Ascending aorta (tissue), 2 donors: ENCODE measurements at regions of chr11 and their contacts with region 1.

Region 1: GRCh38 chr11:17207317-17208258 is at the start of gene PIK3C2A:
- DNase-seq: peak; percentile 89 to 98
- H3K4me3 ChIP-seq: peak within 1 kb of the TSS; percentile 68 to 95
- H3K27ac ChIP-seq: peak within 1 kb of the TSS; percentile 85 to 94
- H3K4me1 ChIP-seq: peaks cover 0 to 10% of the 10 kb centered on the region in 2 donors
- H3K27me3 ChIP-seq: no peaks in the 10 kb centered on the region
- CTCF ChIP-seq: no peak
- total RNA-seq, gene PIK3C2A: 56.6 TPM

Region 2: DNA sequence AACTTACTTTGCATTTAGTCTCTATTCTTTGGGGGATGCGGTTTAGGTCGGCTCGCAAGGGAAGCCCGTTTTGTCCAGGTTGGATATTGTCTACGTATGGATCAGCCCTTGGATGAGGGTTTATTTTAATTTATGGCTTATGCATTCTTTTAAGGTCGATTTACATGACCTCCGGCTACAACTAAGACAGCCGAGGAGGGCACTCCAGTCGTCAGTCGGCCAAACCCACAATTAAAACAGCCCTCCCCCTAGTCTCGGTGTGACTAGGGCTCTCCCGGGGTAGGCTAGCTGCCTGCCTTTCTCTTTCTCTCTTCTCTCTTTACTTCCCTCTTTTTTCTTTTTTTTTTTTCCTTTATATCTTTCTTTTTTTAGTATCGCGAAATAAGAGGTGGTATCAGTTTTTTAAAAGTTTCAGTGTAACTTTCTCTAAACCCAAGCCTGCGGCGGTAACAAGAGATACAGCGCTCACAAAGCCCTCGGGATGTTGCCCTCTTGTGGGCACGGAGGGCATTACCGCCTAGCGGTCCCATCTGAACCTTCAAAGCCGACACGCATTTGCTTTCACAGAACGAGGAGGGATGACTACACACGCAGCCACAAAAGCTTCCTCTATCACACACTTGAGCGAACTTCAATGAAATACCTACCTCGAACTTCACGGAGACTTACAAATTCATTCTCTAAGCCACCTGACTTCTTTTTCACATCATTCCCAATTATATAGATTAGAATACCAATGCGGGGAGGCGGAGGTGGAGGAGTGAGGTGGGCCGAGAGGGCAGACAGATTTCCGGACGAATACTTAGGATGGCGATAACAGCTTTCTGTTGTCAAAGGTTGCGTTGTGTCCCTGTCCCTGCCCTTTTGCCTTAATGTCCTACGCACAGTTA is 601.4 kb before region 1 on chr11:
- intact Hi-C with region 1: loop called (anchors 5 kb)
- DNase-seq: peak in 1 of 2 donors; percentile 94
- H3K4me3 ChIP-seq: peak overlapping the region; percentile 73 to 75
- H3K27ac ChIP-seq: peak overlapping the region; percentile 63
- H3K4me1 ChIP-seq: peaks cover 7 to 18% of the 10 kb centered on the region in 2 donors
- H3K27me3 ChIP-seq: peaks cover 15% of the 10 kb centered on the region
- CTCF ChIP-seq: peak; percentile 79 to 95 (median 95)

Region 3: DNA sequence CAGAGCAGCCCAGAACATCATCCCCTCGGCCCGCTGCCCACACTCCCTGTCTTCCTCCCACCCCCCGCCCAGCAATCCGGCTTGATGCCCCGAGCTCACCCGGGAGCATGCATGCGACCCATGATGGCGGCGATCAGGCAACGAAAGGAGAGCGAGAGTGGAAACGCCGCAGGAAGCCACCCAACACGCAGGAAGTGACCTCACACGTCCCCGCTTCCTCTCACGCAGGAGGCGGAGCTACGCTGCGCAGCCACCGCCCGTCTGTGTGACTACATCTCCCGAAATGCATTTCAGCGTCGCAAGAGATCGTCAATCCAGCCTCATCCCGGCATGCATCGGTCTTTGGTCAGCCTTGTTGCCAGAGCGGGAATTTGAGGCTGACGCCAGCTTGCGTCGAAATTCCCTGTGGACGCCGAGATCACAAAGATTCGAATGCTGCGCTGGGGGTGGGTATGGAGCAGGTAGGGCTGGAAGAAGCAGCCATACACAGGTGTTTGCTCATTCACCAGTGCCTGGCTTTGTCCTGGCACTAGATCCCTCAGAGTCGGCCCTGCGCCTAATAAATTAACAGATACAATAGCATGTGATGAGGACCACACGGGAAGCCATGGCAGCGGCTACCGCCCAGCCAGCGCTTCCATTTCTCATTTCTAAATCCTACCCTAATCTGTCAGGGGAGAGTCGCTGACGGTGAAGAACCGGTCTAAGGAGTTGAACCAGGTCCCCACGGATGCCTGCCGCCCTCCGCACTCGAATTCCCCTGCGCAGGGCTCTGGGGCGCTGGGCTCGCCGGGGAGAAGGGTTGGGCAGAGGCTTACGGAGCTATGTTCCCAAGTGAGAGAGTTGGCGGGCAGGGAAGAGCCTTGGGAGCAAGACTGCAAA is 129.8 kb before region 1 on chr11 and contains the start of gene RPS13:
- intact Hi-C with region 1: loop called (anchors 1 kb)
- DNase-seq: peak; percentile 90 to 98
- H3K4me3 ChIP-seq: peak within 1 kb of the TSS; percentile 87 to 97
- H3K27ac ChIP-seq: peak within 1 kb of the TSS; percentile 92 to 93
- H3K4me1 ChIP-seq: peaks cover 8 to 23% of the 10 kb centered on the region in 2 donors
- H3K27me3 ChIP-seq: no peaks in the 10 kb centered on the region
- CTCF ChIP-seq: no peak
- total RNA-seq, gene RPS13: 987 TPM

Region 4: DNA sequence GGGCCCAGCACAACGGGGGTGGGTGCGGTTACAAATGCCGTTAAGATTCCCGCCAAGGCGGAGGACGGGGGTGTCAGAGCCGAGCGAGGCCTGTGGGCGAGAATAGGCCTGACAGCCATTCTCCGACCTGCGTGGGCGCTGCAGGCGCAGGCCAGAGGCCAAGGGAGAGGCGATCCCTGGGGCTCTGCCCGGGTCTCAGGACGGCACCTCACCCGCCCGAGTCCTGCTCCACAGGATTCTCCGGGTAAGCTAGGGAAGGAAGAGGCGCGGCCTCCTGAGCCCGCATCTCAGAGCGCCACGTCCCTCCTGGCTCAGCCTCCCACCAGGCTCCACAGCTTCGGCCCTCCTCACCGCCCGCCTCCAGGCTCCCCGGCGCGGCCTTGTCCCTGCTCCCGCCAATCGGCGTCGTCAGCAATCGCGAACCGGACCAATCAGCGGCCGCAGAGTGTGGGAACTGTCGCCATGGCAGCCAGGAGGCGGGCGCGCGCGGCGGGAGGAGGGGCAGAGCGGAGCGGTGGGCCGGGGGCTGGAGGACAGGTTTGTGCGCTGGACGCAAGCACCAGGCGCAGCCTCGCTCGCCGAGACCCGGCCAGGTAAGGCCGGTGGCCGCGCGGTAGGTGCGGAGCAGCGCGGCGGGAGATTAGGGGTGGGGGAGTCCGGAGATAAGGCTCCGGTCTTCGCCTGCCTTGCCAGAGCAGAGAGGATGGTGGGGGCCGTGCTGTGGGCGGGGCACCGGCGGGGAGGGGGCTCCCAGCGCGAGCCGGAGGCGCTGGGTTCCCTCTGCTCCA is 68.8 kb after region 1 on chr11 and contains the start of gene NUCB2:
- intact Hi-C with region 1: loop called (anchors 1 kb)
- DNase-seq: peak; percentile 88 to 97
- H3K4me3 ChIP-seq: peak within 1 kb of the TSS; percentile 78 to 85
- H3K27ac ChIP-seq: peak within 1 kb of the TSS; percentile 86 to 92
- H3K4me1 ChIP-seq: peaks cover 0 to 5% of the 10 kb centered on the region in 2 donors
- H3K27me3 ChIP-seq: no peaks in the 10 kb centered on the region
- CTCF ChIP-seq: no peak
- total RNA-seq, gene NUCB2: 47.8 TPM

Region 5: GRCh38 chr11:17389211-17389956 is 181.8 kb after region 1 on chr11:
- intact Hi-C with region 1: loop called (anchors 5 kb)
- DNase-seq: peak in 1 of 2 donors; percentile 86
- H3K4me3 ChIP-seq: peak overlapping the region; percentile 57 to 67
- H3K27ac ChIP-seq: peak overlapping the region in 1 of 2 donors; percentile 20
- H3K4me1 ChIP-seq: peaks cover 7 to 8% of the 10 kb centered on the region in 2 donors
- H3K27me3 ChIP-seq: no peaks in the 10 kb centered on the region
- CTCF ChIP-seq: peak; percentile 70 to 88 (median 78)

Region 6: GRCh38 chr11:17683378-17684161 is 476.0 kb after region 1 on chr11:
- intact Hi-C with region 1: no loop called
- DNase-seq: no peak
- H3K4me3 ChIP-seq: no peak overlapping the region
- H3K27ac ChIP-seq: no peak overlapping the region
- H3K4me1 ChIP-seq: no peaks in the 10 kb centered on the region
- H3K27me3 ChIP-seq: no peaks in the 10 kb centered on the region
- CTCF ChIP-seq: no peak